MCF 10A (cell line): ENCODE measurements at regions of chr15 and their contacts with region 1.

Region 1: GRCh38 chr15:75453703-75454470 is 2.4 kb upstream of the SIN3A start:
- DNase-seq: peak; percentile 100
- H3K4me3 Mint-ChIP-seq: peak overlapping the region; percentile 89
- H3K27ac Mint-ChIP-seq: peak overlapping the region; percentile 85
- H3K4me1 Mint-ChIP-seq: peaks cover 22% of the 10 kb centered on the region
- H3K27me3 Mint-ChIP-seq: no peaks in the 10 kb centered on the region
- CTCF ChIP-seq: no peak

Region 2: GRCh38 chr15:75138016-75138999 is 315.6 kb before region 1 on chr15:
- CTCF ChIA-PET with region 1: no interaction called
- POLR2A ChIA-PET with region 1: no interaction called
- intact Hi-C with region 1: no loop called
- DNase-seq: no peak
- H3K4me3 Mint-ChIP-seq: no peak overlapping the region
- H3K27ac Mint-ChIP-seq: no peak overlapping the region
- H3K4me1 Mint-ChIP-seq: no peaks in the 10 kb centered on the region
- H3K27me3 Mint-ChIP-seq: no peaks in the 10 kb centered on the region
- CTCF ChIP-seq: no peak

Region 3: GRCh38 chr15:75436861-75437260 is 17.0 kb before region 1 on chr15:
- CTCF ChIA-PET with region 1: no interaction called
- POLR2A ChIA-PET with region 1: interaction called, 67 read pairs
- intact Hi-C with region 1: no loop called
- DNase-seq: no peak
- H3K4me3 Mint-ChIP-seq: no peak overlapping the region
- H3K27ac Mint-ChIP-seq: peak overlapping the region; percentile 49
- H3K4me1 Mint-ChIP-seq: peaks cover 7% of the 10 kb centered on the region
- H3K27me3 Mint-ChIP-seq: no peaks in the 10 kb centered on the region
- CTCF ChIP-seq: no peak

Region 4: DNA sequence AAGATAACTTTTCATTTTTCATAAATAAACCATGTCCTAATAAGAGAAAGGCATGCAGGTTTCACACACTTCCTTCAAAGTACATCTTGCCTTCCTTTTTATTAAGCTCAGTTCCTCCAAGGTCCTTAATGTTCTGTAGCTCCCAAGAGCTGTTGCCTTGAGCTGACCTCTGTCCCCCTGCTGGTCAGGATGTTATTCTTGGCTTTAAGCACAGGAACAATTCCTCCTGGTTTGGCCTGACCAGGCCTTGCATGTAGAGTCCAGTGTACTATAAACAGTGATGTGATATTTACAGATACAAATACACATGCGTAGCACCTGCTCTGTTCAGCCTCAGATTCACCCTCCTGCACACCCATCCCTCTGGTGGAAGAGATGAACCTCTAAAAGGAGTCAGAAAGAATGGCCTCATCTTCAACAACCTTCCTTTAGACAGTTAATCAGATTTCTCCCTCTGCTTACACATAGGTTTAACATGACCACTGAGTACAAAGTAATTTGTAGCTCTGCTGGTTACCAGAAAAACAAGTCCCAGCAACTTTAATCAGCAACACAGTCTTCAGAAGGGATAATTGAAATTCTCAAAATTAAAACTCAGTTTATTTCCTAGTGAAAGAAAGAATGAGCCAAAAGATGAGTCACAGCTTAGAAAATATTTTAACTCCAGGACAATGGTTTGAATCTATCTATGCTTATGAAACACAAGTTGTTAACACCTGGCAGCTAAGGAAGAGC is 78.7 kb after region 1 on chr15:
- CTCF ChIA-PET with region 1: interaction called, 5 read pairs
- POLR2A ChIA-PET with region 1: interaction called, 33 read pairs
- intact Hi-C with region 1: no loop called
- DNase-seq: peak; percentile 87
- H3K4me3 Mint-ChIP-seq: peak overlapping the region; percentile 21
- H3K27ac Mint-ChIP-seq: peak overlapping the region; percentile 81
- H3K4me1 Mint-ChIP-seq: peaks cover 30% of the 10 kb centered on the region
- H3K27me3 Mint-ChIP-seq: no peaks in the 10 kb centered on the region
- CTCF ChIP-seq: peak; percentile 38

Region 5: DNA sequence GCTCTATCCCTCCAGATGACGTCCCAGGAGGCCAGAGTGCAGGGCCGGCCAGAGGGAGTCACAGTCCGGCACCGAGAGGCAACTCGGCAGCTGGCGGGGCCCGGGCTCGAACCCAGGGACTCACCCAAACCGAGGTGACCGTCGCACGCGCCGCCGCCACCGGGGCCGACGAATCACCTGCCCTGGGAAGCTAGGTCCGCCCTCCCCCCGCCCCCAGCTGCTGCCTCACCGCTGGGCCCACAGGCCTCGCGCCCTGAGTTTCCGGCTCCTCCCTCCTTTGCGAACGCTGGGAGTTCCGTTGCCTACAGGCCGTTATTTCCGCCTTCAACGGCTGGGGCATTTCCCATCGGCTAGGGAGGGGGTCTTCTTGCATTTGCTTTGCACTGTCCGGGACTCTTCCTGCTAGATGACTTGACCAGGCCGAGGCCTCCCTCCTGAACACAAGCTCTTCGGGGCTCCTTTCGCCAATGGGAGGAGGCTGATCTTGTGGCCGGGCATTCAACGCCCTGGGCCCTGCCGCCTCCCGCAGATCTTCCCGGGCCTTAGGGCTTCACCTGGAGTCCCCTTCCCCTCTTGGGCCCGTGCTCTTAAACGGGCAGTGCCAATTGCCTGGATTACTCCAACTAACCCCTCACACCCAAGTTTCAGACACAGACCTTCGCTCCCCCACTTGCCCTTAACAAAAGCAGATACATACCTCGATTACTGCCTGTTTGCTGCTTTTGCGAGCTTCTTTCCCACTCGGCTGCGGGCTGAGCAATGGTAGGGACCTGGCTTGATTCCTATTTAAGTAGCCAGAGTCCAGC is 171.9 kb after region 1 on chr15 and contains the start of gene SNUPN:
- CTCF ChIA-PET with region 1: interaction called, 4 read pairs
- POLR2A ChIA-PET with region 1: interaction called, 88 read pairs
- intact Hi-C with region 1: loop called (anchors 5 kb)
- DNase-seq: peak; percentile 94
- H3K4me3 Mint-ChIP-seq: peak within 1 kb of the TSS; percentile 87
- H3K27ac Mint-ChIP-seq: peak within 1 kb of the TSS; percentile 95
- H3K4me1 Mint-ChIP-seq: peaks cover 15% of the 10 kb centered on the region
- H3K27me3 Mint-ChIP-seq: no peaks in the 10 kb centered on the region
- CTCF ChIP-seq: no peak
- total RNA-seq, gene SNUPN: 23.9 and 28.9 TPM in 2 replicates

Region 6: DNA sequence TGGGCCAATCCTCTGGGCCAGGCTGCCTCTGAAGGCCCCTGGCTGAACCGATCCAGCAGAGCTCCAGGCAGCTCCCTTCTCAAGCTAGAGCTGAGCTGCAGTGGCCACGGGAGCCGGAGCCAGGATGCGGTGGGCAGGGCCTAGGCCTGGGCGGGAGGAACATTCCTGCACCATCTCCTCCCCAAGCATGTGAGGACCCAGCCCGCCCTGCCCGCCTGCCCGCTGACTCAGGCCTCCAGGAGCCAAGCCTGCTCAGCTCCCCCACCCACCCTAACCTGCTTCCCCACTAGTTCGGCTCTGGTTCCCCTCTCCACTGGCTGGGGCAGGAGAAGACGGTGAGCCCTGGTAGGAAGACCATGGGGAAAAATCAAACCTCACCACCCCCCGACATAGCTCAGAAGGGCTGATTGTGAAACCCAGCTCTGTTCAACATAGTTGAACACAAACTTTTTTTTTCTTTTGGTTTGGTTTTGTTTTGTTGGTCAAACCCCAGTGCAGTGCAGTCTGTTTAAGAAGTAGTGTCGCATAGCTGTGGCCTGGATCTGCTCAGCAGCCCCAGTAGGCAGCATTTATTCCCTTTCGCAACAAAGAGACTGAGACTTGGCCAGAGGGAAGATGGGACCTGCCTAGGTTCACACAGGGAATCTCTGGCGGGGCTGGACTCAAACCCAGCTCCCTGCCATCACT is 207.3 kb after region 1 on chr15:
- CTCF ChIA-PET with region 1: no interaction called
- POLR2A ChIA-PET with region 1: interaction called, 96 read pairs
- intact Hi-C with region 1: no loop called
- DNase-seq: peak; percentile 89
- H3K4me3 Mint-ChIP-seq: peak overlapping the region; percentile 40
- H3K27ac Mint-ChIP-seq: peak overlapping the region; percentile 97
- H3K4me1 Mint-ChIP-seq: peaks cover 47% of the 10 kb centered on the region
- H3K27me3 Mint-ChIP-seq: no peaks in the 10 kb centered on the region
- CTCF ChIP-seq: no peak